Activated naive CD4-positive, alpha-beta T cell treated with anti-CD3 and anti-CD28 coated beads for 36 hours (primary cell): ENCODE measurements at regions of chr9 and their contacts with region 1.

Region 1: DNA sequence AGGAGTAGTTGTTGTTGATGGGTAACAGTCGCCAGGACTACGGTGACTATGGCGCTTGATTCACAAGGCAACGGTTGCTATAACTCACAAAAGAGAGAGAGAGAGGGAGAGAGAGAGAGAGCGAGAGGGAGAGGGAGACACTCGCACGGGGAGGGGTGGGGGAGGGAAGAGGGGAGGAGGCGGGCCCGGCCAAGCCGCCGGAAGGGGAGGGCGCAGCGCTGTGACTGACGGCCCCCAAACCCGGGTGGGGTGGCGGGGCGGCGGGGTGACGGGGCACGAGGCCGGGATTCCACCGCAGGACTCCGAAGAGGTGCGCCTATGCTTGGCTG is at the start of gene RFX3:
- DNase-seq: peak; percentile 94
- H3K4me3 Mint-ChIP-seq: peak within 1 kb of the TSS; percentile 93
- H3K27ac Mint-ChIP-seq: peak within 1 kb of the TSS; percentile 100
- H3K4me1 Mint-ChIP-seq: peaks cover 34% of the 10 kb centered on the region
- H3K27me3 Mint-ChIP-seq: no peaks in the 10 kb centered on the region
- total RNA-seq, gene RFX3: 11.0 to 12.7 TPM

Region 2: DNA sequence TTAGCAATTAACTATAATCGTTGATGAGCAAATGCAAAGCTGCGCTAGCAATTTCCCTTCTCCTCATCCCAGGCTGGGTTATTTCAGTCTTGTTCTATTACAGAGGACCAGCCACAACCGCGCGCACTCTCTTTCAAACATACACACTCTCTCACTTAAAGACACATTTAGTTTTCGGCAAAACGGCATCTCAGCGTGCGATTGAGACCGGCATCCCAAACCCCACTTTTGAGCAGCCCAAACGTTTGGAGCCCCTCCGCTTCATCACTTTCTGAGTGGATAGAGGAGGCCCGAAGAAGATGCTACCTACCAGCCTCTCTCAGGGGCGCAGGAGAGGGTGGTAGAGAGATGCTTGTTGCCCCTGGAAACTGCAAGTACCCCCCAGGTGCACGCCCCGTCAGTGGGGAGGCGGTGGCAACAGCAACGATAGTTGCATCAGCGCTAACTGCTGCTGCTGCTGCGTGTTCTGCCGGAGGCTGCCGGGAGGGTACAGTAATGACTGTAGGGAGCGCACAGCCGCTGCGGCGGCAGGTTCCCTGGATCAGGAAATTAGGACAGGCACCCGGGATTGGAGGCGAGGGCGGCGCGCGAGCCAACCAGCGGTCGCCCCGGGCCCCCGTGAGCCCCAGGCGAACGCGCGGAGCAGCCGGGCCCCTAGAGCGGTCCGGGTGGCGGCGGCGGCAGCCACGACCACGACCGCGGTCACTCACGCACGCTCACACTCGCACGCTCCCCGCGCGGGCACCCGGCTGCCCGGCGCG is 904.7 kb before region 1 on chr9:
- CTCF ChIA-PET with region 1: no interaction called
- intact Hi-C with region 1: loop called (anchors 5 kb)
- DNase-seq: peak; percentile 89
- H3K4me3 Mint-ChIP-seq: peak overlapping the region; percentile 78
- H3K27ac Mint-ChIP-seq: peak overlapping the region; percentile 65
- H3K4me1 Mint-ChIP-seq: peaks cover 12% of the 10 kb centered on the region
- H3K27me3 Mint-ChIP-seq: peaks cover 62% of the 10 kb centered on the region

Region 3: GRCh38 chr9:3385871-3386270 is 139.9 kb before region 1 on chr9:
- CTCF ChIA-PET with region 1: no interaction called
- intact Hi-C with region 1: loop called (anchors 1 kb)
- DNase-seq: peak; percentile 75
- H3K4me3 Mint-ChIP-seq: no peak overlapping the region
- H3K27ac Mint-ChIP-seq: peak overlapping the region; percentile 56
- H3K4me1 Mint-ChIP-seq: peaks cover 49% of the 10 kb centered on the region
- H3K27me3 Mint-ChIP-seq: no peaks in the 10 kb centered on the region

Region 4: DNA sequence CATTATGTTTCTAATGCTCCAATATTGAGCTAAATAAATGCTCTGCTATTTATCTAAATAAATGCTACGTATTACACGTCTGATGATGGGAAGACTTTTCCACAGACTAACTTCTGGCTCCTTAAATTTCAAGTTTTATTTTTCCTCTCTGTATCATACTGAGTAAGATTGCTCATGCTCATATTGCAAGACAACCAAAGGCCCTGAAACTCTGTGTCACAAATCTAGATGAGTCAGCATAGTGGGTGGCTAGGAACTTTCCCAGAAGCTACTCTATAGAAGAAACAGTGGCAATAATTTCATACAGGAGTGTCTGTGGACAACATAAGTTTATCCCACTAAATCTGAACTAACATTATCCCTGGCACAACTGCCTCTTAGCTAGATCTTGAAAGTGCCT is 53.0 kb after region 1 on chr9:
- CTCF ChIA-PET with region 1: no interaction called
- intact Hi-C with region 1: loop called (anchors 2 kb)
- DNase-seq: peak; percentile 33
- H3K4me3 Mint-ChIP-seq: no peak overlapping the region
- H3K27ac Mint-ChIP-seq: no peak overlapping the region
- H3K4me1 Mint-ChIP-seq: peaks cover 8% of the 10 kb centered on the region
- H3K27me3 Mint-ChIP-seq: no peaks in the 10 kb centered on the region

Region 5: GRCh38 chr9:4297151-4297785 is 771.5 kb after region 1 on chr9:
- CTCF ChIA-PET with region 1: no interaction called
- intact Hi-C with region 1: loop called (anchors 2 kb)
- DNase-seq: peak; percentile 80
- H3K4me3 Mint-ChIP-seq: peak overlapping the region; percentile 86
- H3K27ac Mint-ChIP-seq: peak overlapping the region; percentile 86
- H3K4me1 Mint-ChIP-seq: peaks cover 42% of the 10 kb centered on the region
- H3K27me3 Mint-ChIP-seq: peaks cover 7% of the 10 kb centered on the region

Region 6: GRCh38 chr9:4740638-4741364 is 1215.0 kb after region 1 on chr9 and contains the start of gene AK3:
- CTCF ChIA-PET with region 1: no interaction called
- intact Hi-C with region 1: loop called (anchors 2 kb)
- DNase-seq: peak; percentile 90
- H3K4me3 Mint-ChIP-seq: peak within 1 kb of the TSS; percentile 91
- H3K27ac Mint-ChIP-seq: peak within 1 kb of the TSS; percentile 89
- H3K4me1 Mint-ChIP-seq: peaks cover 55% of the 10 kb centered on the region
- H3K27me3 Mint-ChIP-seq: no peaks in the 10 kb centered on the region
- total RNA-seq, gene AK3: 50.2 to 50.9 TPM